Right ventricle myocardium inferior (tissue), 1 donor: ENCODE measurements at regions of chr20 and their contacts with region 1.

Region 1: GRCh38 chr20:49713753-49714712 is at the start of gene B4GALT5:
- DNase-seq: peak; percentile 83
- ATAC-seq: peak; percentile 87
- total RNA-seq, gene B4GALT5: 44.0 TPM

Region 2: GRCh38 chr20:49631061-49631788 is 82.8 kb before region 1 on chr20:
- intact Hi-C with region 1: loop called (anchors 5 kb)
- DNase-seq: no peak
- ATAC-seq: peak; percentile 30

Region 3: GRCh38 chr20:49657118-49657901 is 56.7 kb before region 1 on chr20:
- intact Hi-C with region 1: loop called (anchors 5 kb)
- DNase-seq: no peak
- ATAC-seq: peak; percentile 64

Region 4: GRCh38 chr20:49676581-49677291 is 37.3 kb before region 1 on chr20:
- intact Hi-C with region 1: no loop called
- DNase-seq: no peak
- ATAC-seq: peak; percentile 47

Region 5: GRCh38 chr20:49699200-49699992 is 14.6 kb before region 1 on chr20:
- intact Hi-C with region 1: no loop called
- DNase-seq: no peak
- ATAC-seq: no peak

Region 6: GRCh38 chr20:49797344-49797615 is 83.2 kb after region 1 on chr20:
- intact Hi-C with region 1: no loop called
- DNase-seq: no peak
- ATAC-seq: no peak